ENCODE measurements at regions of chr3 and their contacts with region 1.

Region 1: DNA sequence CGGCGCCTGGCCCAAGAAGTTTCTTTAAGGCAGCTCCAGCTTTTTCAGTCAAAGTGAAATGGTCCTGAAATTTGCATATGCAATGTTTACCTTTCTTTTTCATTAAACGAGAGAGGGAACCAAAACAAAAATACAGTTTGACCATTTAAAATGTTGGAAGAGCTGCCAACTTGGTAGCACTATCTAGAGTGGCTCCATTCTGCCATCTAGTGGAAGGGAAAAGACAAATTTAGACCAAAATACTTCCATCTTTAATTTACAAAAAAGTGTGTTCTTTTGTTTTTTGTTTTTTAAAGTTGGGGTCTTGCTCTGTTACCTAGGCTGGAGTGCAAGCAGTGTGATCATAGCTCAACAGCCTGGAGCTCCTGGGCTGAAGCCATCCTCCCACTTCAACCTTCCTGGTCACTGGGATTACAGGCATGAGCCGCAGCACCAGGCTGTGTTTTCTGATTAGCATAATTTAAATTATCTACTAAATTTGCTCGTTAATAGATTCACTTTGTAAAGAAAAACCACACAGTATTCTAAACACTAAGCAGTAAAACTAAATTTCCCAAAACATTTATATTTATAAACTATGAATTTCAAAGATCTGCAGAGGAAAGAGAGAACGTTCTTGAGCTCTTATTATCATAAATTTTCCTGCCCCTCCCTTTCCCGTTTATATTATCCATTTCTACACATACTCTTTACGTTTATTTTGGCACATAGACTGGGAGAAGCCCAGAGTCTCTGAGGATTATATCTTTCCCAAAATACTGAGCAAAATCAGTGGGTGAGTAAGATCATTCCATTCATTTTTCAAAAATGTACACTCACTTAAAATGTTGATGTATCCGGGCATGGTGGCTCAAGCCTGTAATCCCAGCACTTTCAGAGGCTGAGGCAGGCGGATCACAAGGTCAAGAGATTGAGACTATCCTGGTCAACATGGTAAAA is 15.4 kb upstream of the RFC4 start:
- DNase-seq: peak; percentile 47
- ATAC-seq: no peak
- H3K4me3 Mint-ChIP-seq: no peak overlapping the region
- H3K27ac Mint-ChIP-seq: no peak overlapping the region
- H3K4me1 Mint-ChIP-seq: peaks cover 24% of the 10 kb centered on the region
- H3K27me3 Mint-ChIP-seq: peaks cover 6% of the 10 kb centered on the region

Region 2: GRCh38 chr3:186609247-186609868 is 212.3 kb before region 1 on chr3:
- CTCF ChIA-PET with region 1: interaction called, 164 read pairs
- POLR2A ChIA-PET with region 1: interaction called, 4 read pairs
- DNase-seq: no peak
- ATAC-seq: no peak
- H3K4me3 Mint-ChIP-seq: no peak overlapping the region
- H3K27ac Mint-ChIP-seq: no peak overlapping the region
- H3K4me1 Mint-ChIP-seq: peaks cover 2% of the 10 kb centered on the region
- H3K27me3 Mint-ChIP-seq: peaks cover 22% of the 10 kb centered on the region

Region 3: DNA sequence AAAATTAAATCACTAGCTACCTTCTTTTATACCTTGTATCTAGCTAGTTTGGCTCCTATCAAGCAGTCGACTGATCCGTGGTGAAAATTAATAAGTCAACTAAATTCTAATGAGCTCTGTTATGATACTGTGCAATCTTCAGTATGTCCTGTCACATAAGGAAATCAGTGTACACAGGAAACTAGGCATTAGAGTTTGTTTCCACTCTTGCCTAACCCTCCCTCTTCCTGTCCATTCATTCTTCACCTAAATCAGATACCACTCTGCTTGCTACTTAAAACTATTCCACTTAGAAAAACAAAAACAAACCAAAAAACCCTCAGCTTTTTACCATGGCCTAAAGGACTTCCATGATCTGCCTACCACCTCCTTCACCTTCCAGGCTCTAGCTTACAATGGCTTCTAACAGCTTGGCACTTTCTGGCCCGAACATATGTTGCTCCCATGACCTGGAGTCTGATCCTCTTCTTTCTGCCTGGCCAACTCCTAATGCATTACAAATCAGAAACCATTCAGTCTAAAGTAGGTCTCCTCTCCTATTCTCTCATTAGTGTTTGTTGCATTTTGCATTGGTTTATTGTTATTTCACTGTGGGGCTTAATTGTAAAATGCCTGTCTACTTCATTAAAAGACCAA is 23.3 kb before region 1 on chr3:
- CTCF ChIA-PET with region 1: interaction called, 17 read pairs
- POLR2A ChIA-PET with region 1: no interaction called
- DNase-seq: no peak
- ATAC-seq: peak; percentile 47
- H3K4me3 Mint-ChIP-seq: no peak overlapping the region
- H3K27ac Mint-ChIP-seq: peak overlapping the region; percentile 19
- H3K4me1 Mint-ChIP-seq: peaks cover 52% of the 10 kb centered on the region
- H3K27me3 Mint-ChIP-seq: no peaks in the 10 kb centered on the region

Region 4: GRCh38 chr3:186806089-186807055 is 15.3 kb before region 1 on chr3 and contains the start of gene RFC4:
- CTCF ChIA-PET with region 1: interaction called, 43 read pairs
- POLR2A ChIA-PET with region 1: interaction called, 5 read pairs
- DNase-seq: peak; percentile 90
- ATAC-seq: peak; percentile 79
- H3K4me3 Mint-ChIP-seq: peak within 1 kb of the TSS; percentile 96
- H3K27ac Mint-ChIP-seq: peak within 1 kb of the TSS; percentile 96
- H3K4me1 Mint-ChIP-seq: peaks cover 47% of the 10 kb centered on the region
- H3K27me3 Mint-ChIP-seq: no peaks in the 10 kb centered on the region
- total RNA-seq, gene RFC4: 98.9 to 106 TPM

Measured in activated CD8-positive, alpha-beta T cell treated with anti-CD3 and anti-CD28 coated beads, Interleukin-2, amount 10 ng/mL, durations not matched to agents 7 days and 5 days (primary cell).